Lower leg skin (tissue), 4 donors: ENCODE measurements at regions of chr9 and their contacts with region 1.

Region 1: DNA sequence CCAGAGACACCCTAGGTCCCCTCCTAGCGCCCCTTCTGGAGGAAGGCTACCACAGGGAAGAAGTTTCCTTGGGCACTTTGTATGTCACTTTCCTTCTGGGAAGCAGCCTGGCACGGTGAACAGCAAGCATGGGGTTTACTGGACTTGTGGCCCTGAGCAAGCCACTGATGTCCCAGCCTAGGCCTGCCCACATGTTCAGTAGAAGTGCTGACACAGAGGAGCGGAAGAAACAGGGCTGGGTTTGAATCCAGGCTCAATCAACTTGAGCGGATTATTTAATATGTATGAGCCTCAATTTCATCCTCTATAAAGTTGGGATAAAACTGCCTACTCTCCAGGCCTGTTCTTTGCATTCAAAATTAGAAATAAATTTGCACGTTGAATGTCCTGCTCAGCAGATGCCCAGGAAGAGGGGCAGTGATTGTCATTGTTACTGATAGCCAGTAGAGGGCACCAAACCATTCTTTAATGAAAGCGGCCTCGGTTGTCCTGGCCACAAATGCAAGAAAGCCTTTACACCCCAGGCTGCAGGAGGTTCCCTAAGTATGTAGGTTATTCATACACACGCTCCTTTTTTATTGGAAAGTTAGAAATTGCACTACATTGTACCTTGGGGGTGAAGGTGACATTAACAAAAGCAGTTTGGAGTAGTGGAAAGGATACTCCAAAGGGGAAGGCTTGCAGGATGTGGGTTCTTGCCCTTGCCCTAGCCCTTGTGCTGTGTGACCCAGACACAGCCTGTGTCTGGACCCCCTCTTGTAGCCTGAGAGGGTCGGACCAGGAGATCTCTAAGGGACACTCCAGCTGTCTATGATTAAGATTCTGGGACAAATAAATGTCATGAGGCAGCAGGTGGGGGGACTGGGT is 13.4 kb upstream of the XPA start:
- DNase-seq: peak in 1 of 2 donors; percentile 33
- H3K4me3 ChIP-seq: no peak overlapping the region
- CTCF ChIP-seq: no peak
- POLR2A ChIP-seq: no peak

Region 2: GRCh38 chr9:97459099-97459725 is 251.4 kb before region 1 on chr9:
- intact Hi-C with region 1: no loop called
- DNase-seq: no peak
- H3K4me3 ChIP-seq: no peak overlapping the region
- CTCF ChIP-seq: no peak
- POLR2A ChIP-seq: no peak

Region 3: DNA sequence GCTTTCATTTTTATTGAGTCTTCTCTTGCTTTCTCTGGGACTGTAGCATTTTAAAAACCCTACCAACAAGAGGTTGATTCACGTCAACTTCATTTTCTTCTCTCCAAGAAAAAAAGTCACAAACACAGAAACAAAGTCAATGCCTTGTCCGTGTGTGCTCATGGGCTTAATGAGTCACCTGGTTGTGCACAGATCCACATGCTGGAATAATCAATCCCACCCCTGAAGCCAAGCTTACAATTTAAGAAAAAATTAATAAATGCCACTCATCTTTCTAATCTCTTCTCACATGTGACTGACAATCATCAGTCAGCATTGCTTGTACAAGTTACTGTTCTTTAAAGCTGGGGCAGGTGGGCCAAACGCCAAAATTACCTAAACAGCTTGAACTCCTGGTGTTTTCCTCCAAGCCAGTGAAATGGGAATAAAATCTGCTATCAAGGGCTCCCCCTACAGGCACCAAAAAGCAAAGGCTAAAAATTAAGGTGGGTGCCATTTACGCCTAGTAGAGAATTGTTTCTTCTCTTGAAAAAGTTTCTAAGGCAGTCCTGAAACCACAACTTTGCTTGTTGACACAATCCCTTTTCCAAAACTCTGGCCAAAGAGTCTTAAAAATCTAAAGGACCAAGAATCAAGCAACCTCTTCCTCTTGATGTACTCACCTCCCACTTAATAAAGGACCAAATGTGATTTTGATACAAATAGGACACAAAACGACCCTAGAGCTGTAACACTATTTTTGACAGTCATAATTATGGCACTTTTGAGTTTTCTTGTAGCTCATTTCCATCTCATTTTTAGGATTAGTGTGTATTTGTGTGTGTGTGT is 190.4 kb after region 1 on chr9:
- intact Hi-C with region 1: loop called (anchors 5 kb)
- DNase-seq: no peak
- H3K4me3 ChIP-seq: no peak overlapping the region
- CTCF ChIP-seq: no peak
- POLR2A ChIP-seq: no peak

Region 4: GRCh38 chr9:98118640-98119601 is 408.3 kb after region 1 on chr9 and contains the start of gene TRIM14:
- intact Hi-C with region 1: no loop called
- DNase-seq: no peak
- H3K4me3 ChIP-seq: peak within 1 kb of the TSS; percentile 56
- CTCF ChIP-seq: no peak
- POLR2A ChIP-seq: no peak
- total RNA-seq, gene TRIM14: 12.0 to 17.5 (median 16.3) TPM